ENCODE measurements at regions of chr3 and their contacts with region 1.

Region 1: GRCh38 chr3:132352541-132353143 is 35.4 kb downstream of the ACP3 start:
- H3K4me3 Mint-ChIP-seq: no peak overlapping the region
- H3K27ac Mint-ChIP-seq: no peak overlapping the region
- H3K4me1 Mint-ChIP-seq: no peaks in the 10 kb centered on the region
- H3K27me3 Mint-ChIP-seq: no peaks in the 10 kb centered on the region

Region 2: DNA sequence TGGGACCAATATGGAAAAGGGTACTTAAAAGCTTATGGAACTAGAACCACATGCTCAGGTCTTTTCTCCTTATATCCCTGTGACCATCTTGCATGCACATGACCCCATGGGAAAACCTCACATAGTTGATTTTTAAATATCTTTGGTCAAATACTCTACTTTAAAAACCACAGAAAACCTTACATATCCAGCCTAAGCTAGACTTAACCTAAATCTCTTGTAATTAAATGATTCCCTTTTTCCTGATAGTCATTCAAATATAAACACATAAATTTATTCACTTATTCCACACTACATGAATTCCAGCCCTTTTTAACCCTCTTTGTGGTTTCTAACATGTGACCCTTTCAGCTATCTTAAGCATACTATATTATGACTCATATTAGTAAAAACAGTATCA is 111.4 kb after region 1 on chr3:
- intact Hi-C with region 1: loop called (anchors 10 kb)
- H3K4me3 Mint-ChIP-seq: no peak overlapping the region
- H3K27ac Mint-ChIP-seq: no peak overlapping the region
- H3K4me1 Mint-ChIP-seq: no peaks in the 10 kb centered on the region
- H3K27me3 Mint-ChIP-seq: no peaks in the 10 kb centered on the region

Region 3: DNA sequence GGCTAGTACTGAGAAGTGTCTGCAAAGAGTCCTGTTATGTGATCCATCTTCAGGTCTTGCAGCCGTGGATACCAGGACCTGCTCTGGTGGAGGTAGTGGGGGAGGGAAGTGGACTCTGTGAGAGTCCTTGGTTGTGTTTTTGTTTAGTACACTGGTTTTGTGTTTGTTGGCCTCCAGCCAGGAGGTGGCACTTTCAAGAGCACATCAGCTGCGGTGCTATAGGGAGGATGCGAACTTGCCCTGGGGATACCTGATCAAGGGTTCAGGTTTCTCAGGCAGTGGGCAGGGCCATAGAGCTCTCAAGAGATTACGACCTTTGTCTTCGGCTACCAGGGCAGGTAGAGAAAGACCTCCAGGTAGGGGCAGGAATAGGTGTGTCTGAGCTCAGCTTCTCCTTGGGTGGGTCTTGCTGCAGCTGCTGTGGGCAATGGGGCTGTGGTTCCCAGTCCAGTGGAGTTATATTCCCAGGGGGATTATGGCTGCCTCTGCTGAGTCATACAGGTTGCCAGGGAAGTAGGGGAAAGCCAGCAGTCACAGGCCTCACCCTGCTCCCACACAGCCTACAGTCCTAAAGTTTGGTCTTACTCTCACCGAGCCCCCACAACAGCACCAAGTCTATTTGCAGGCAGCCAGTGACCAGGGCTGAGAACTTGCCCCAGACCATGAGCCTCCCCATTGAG is 502.4 kb after region 1 on chr3:
- intact Hi-C with region 1: no loop called
- H3K4me3 Mint-ChIP-seq: no peak overlapping the region
- H3K27ac Mint-ChIP-seq: no peak overlapping the region
- H3K4me1 Mint-ChIP-seq: no peaks in the 10 kb centered on the region
- H3K27me3 Mint-ChIP-seq: no peaks in the 10 kb centered on the region

Measured in dendritic cell treated with granulocyte-macrophage colony-stimulating factor and Interleukin-4, amounts not matched to agents 40 ng/mL and 50 ng/mL, for 4 days (primary cell).